B cell (primary cell): ENCODE measurements at regions of chr17 and their contacts with region 1.

Region 1: GRCh38 chr17:6435968-6436367 is 1.0 kb upstream of the AIPL1 start:
- DNase-seq: peak; percentile 74
- ATAC-seq: peak; percentile 86
- H3K4me3 ChIP-seq: no peak overlapping the region
- H3K4me3 Mint-ChIP-seq: no peak overlapping the region
- H3K27ac ChIP-seq: no peak overlapping the region
- H3K27ac Mint-ChIP-seq: peak overlapping the region; percentile 64
- H3K4me1 ChIP-seq: no peaks in the 10 kb centered on the region
- H3K4me1 Mint-ChIP-seq: peaks cover 2% of the 10 kb centered on the region
- H3K27me3 ChIP-seq: peaks cover 0 to 15% (median 6%) of the 10 kb centered on the region in 4 experiments
- H3K27me3 Mint-ChIP-seq: peaks cover 36% of the 10 kb centered on the region
- CTCF ChIP-seq: peak; percentile 84

Region 2: GRCh38 chr17:5706577-5707216 is 729.3 kb before region 1 on chr17:
- CTCF ChIA-PET with region 1: interaction called, 3 read pairs
- POLR2A ChIA-PET with region 1: no interaction called
- intact Hi-C with region 1: loop called (anchors 5 kb)
- DNase-seq: peak; percentile 66
- ATAC-seq: peak; percentile 41
- H3K4me3 ChIP-seq: no peak overlapping the region
- H3K4me3 Mint-ChIP-seq: no peak overlapping the region
- H3K27ac ChIP-seq: no peak overlapping the region
- H3K27ac Mint-ChIP-seq: no peak overlapping the region
- H3K4me1 ChIP-seq: no peaks in the 10 kb centered on the region
- H3K4me1 Mint-ChIP-seq: no peaks in the 10 kb centered on the region
- H3K27me3 ChIP-seq: peaks cover 0 to 16% (median 0%) of the 10 kb centered on the region in 4 experiments
- H3K27me3 Mint-ChIP-seq: peaks cover 29% of the 10 kb centered on the region
- CTCF ChIP-seq: peak; percentile 70

Region 3: DNA sequence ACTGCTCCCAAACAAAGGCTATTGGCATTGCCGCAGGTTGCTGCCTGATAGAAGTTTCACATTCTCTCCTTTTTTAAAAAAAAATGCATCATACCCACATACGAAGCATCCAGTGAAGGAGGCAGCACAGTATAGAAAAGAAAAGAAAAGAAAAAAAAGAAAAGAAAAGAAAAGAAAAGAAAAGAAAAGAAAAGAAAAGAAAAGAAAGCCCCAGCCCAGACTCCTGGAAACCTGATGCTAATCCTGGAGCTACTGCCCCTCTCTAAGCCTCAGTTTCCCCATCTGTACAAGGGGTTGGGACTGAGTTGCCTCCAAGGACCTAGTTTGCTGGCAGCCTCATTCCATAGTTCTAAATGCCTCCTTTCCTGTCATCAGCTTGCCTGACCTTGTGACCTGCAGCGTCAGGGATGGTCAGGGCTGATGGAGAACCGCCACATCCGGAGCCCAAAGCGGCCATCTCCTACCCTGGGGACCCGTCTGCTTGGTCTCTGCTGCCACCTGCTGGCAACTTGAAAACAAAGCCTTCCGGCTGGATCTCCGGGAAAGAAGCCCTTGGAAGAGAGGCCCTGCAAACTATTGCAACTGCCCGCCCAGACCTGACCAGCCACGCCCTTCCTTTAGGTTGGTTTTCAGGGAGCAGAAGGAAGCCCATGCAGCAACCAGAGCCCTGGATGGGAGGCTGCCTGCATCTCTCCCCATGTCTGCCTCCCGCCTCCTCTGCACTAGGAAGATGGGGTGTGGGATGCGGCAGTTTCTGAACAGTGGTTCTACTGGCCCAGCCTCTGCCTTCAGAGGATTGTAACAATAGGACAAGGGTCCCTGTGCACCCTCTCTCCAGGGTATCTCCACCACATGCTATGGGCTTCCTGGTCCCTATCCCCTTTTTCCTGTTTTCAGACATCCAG is 14.0 kb before region 1 on chr17:
- CTCF ChIA-PET with region 1: interaction called, 20 read pairs
- POLR2A ChIA-PET with region 1: no interaction called
- intact Hi-C with region 1: no loop called
- DNase-seq: peak; percentile 74
- ATAC-seq: peak; percentile 51
- H3K4me3 ChIP-seq: no peak overlapping the region
- H3K4me3 Mint-ChIP-seq: no peak overlapping the region
- H3K27ac ChIP-seq: no peak overlapping the region
- H3K27ac Mint-ChIP-seq: no peak overlapping the region
- H3K4me1 ChIP-seq: peaks cover 0 to 4% of the 10 kb centered on the region in 2 donors
- H3K4me1 Mint-ChIP-seq: peaks cover 4% of the 10 kb centered on the region
- H3K27me3 ChIP-seq: peaks cover 0 to 4% (median 0%) of the 10 kb centered on the region in 4 experiments
- H3K27me3 Mint-ChIP-seq: peaks cover 15% of the 10 kb centered on the region
- CTCF ChIP-seq: peak; percentile 81